OCI-LY7 (cell line): ENCODE measurements at regions of chr13 and their contacts with region 1.

Region 1: GRCh38 chr13:110715395-110716235 is 2.1 kb downstream of the ING1 start:
- DNase-seq: peak; percentile 93
- H3K4me3 ChIP-seq: peak overlapping the region; percentile 97
- H3K27ac ChIP-seq: peak overlapping the region; percentile 99
- H3K4me1 ChIP-seq: peaks cover 21% of the 10 kb centered on the region
- CTCF ChIP-seq: 0 out of 2 replicates have a peak, but pooled peaks have one; percentile 15

Region 2: GRCh38 chr13:109162248-109163053 is 1553.2 kb before region 1 on chr13:
- CTCF ChIA-PET with region 1: no interaction called
- POLR2A ChIA-PET with region 1: no interaction called
- intact Hi-C with region 1: loop called (anchors 10 kb)
- DNase-seq: peak; percentile 89
- H3K4me3 ChIP-seq: peak overlapping the region; percentile 65
- H3K27ac ChIP-seq: peak overlapping the region; percentile 88
- H3K4me1 ChIP-seq: peaks cover 68% of the 10 kb centered on the region
- CTCF ChIP-seq: no peak

Region 3: GRCh38 chr13:110615322-110616102 is 100.1 kb before region 1 on chr13 and contains the start of gene NAXD:
- CTCF ChIA-PET with region 1: no interaction called
- POLR2A ChIA-PET with region 1: no interaction called
- intact Hi-C with region 1: loop called (anchors 10 kb)
- DNase-seq: peak; percentile 80
- H3K4me3 ChIP-seq: peak within 1 kb of the TSS; percentile 87
- H3K27ac ChIP-seq: peak within 1 kb of the TSS; percentile 35
- H3K4me1 ChIP-seq: peaks cover 14% of the 10 kb centered on the region
- CTCF ChIP-seq: no peak
- total RNA-seq, gene NAXD: 8.3 and 9.4 TPM in 2 replicates

Region 4: DNA sequence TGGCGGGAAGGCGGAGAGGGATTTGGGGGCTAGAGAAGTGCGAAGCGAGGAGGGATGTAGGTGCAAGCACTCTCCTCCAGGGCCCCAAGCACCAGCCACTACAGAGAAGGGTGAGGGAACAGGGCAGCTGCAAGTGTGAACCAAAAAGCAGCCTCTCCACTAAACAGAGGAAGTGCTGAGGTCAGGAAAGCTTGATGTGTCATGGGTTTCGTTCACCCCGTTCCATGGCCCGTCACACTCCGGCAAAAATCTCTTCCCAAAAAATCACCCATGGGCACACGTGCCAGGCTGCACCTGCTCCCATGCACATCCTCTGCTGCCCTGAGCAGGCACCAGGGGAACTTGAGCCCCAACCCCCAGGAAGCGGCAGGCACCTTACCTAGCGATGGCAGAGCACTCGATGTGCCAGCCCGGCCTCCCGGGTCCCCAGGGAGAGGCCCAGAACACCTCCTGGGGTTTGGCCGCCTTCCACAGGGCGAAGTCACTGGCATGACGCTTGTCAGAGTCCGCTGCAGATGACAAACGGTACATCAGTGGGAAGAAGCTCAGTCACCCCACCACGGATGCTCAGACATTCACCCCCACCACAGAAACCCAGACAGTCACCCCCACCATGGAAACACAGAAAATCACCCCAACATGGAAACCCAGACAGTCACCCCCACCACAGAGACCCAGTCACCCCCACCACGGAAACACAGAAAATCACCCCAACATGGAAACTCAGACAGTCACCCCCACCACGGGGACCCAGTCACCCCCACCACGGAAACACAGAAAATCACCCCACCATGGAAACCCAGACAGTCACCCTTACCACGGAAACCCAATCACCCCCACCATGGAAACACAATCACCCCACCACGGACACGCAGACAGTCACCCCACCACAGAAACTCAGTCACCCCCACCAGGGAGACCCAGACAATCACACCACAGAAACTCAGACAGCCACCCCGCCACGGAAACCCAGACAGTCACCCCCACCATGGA is 38.7 kb before region 1 on chr13:
- CTCF ChIA-PET with region 1: no interaction called
- POLR2A ChIA-PET with region 1: interaction called, 7 read pairs
- intact Hi-C with region 1: loop called (anchors 2 kb)
- DNase-seq: peak; percentile 61
- H3K4me3 ChIP-seq: peak overlapping the region; percentile 43
- H3K27ac ChIP-seq: peak overlapping the region; percentile 96
- H3K4me1 ChIP-seq: peaks cover 26% of the 10 kb centered on the region
- CTCF ChIP-seq: no peak

Region 5: DNA sequence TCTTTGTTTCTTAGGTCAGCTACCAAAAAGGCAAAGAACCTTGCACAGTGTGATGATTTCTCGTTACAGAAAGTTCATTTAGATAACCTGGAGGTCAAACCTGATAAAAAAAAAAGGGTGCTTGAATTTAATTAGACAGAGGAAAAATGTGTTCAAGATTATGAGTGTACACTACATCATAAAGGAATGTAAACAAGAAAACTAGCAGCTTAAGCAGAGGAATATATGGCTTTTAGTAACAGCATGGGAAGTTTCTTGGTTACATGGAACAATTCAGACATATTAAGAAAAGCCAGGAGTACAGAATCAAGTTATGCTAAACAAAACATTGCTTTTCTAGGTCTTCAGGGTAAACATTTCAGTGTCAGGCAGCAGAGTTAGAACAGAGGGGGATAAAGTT is 30.8 kb after region 1 on chr13:
- CTCF ChIA-PET with region 1: no interaction called
- POLR2A ChIA-PET with region 1: no interaction called
- intact Hi-C with region 1: no loop called
- DNase-seq: no peak
- H3K4me3 ChIP-seq: no peak overlapping the region
- H3K27ac ChIP-seq: no peak overlapping the region
- H3K4me1 ChIP-seq: no peaks in the 10 kb centered on the region
- CTCF ChIP-seq: no peak

Region 6: GRCh38 chr13:111184458-111185401 is 469.1 kb after region 1 on chr13:
- CTCF ChIA-PET with region 1: no interaction called
- POLR2A ChIA-PET with region 1: no interaction called
- intact Hi-C with region 1: loop called (anchors 10 kb)
- DNase-seq: peak; percentile 95
- H3K4me3 ChIP-seq: peak overlapping the region; percentile 69
- H3K27ac ChIP-seq: peak overlapping the region; percentile 100
- H3K4me1 ChIP-seq: peaks cover 68% of the 10 kb centered on the region
- CTCF ChIP-seq: no peak